Activated T-helper 2 cell treated with anti-CD3 and anti-CD28 coated beads, Interferon-gamma antibody, Interleukin-2, Interleukin-4, amounts not matched to agents 10 μg/mL and 5 μg/mL and 100 μg/mL, durations not matched to agents 14 hours and 24 hours and 36 hours (primary cell): ENCODE measurements at regions of chr13 and their contacts with region 1.

Region 1: DNA sequence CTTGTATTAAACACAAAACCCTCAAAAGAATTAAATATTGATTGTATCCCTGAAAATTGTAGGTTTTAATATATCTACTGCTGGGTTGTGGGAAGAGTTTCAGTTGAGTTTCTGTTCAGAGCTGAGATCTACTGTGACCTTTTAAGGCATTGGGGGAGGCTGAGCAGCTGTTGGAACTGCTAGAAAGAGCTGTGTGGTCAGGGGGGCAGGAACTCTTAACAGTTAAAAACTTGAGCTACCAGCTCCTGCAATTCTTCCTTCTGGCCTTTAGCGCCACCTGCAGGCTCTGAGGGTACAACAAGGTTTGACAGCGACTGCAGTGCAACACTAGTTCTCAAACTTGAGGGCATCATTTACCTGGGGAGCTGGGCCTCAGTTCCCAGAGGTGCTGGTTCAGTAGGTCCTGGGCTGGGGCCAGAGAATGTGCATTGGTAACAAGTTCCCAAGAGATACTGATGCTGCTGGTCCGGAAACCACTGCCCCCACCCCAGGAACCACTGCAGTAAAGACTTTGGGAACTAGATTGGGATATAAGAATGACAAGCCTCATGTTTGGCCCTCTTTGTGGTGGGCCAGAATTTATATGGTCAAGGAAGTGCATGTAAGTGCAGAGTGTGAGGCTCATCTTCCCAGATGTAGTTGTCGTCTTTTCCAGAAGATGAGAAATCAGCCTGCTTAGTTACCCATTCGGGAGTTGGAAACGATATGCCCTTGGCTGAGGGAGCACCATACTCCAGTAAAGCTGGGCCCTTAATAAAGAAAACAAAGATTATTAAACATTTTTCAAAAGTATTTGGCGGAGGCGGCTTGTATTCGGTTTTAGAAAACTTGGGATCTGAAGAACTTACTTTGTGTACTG is 2.6 kb downstream of the RNASEH2B start:
- DNase-seq: peak; percentile 88
- H3K4me3 Mint-ChIP-seq: peak overlapping the region; percentile 93
- H3K27ac Mint-ChIP-seq: peak overlapping the region; percentile 89
- H3K4me1 Mint-ChIP-seq: peaks cover 63% of the 10 kb centered on the region
- H3K27me3 Mint-ChIP-seq: no peaks in the 10 kb centered on the region

Region 2: GRCh38 chr13:49976314-49977258 is 935.6 kb before region 1 on chr13:
- intact Hi-C with region 1: loop called (anchors 1 kb)
- DNase-seq: peak; percentile 50
- H3K4me3 Mint-ChIP-seq: no peak overlapping the region
- H3K27ac Mint-ChIP-seq: no peak overlapping the region
- H3K4me1 Mint-ChIP-seq: peaks cover 8% of the 10 kb centered on the region
- H3K27me3 Mint-ChIP-seq: no peaks in the 10 kb centered on the region

Region 3: DNA sequence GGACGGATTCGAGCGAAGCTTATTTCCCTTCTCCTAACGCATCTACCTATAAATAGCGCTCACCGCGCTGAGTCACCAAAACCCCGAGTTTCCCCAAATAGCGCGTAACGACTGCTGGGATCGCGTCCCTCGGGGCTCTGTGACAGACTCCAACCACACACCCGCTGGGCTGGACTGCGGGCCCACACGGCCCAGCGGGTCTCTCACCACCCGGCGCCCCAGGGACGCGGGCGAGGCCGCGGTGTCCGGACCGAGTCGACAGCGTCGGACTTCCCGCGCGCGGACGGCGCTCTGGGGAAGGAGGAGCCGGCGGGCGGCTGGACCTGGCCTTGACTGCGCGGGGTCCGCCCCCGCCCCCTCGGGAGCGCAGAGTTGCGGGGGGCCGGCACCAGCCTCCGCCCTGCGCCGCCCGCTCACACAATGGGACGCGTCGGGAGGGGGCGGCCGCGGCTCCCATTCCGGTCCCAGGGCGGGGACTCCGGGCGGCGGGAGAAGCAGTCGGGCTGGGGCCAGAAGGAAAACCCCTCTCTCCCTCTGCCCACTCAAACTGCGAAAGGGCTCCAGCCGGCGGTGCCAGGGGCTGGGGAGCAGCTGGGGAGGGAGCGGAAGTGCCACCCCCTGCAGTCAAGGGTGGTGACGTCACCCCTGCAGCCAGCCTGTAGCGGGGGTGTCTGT is 788.2 kb before region 1 on chr13:
- intact Hi-C with region 1: loop called (anchors 2 kb)
- DNase-seq: peak; percentile 58
- H3K4me3 Mint-ChIP-seq: peak overlapping the region; percentile 78
- H3K27ac Mint-ChIP-seq: peak overlapping the region; percentile 80
- H3K4me1 Mint-ChIP-seq: peaks cover 32% of the 10 kb centered on the region
- H3K27me3 Mint-ChIP-seq: peaks cover 29% of the 10 kb centered on the region

Region 4: DNA sequence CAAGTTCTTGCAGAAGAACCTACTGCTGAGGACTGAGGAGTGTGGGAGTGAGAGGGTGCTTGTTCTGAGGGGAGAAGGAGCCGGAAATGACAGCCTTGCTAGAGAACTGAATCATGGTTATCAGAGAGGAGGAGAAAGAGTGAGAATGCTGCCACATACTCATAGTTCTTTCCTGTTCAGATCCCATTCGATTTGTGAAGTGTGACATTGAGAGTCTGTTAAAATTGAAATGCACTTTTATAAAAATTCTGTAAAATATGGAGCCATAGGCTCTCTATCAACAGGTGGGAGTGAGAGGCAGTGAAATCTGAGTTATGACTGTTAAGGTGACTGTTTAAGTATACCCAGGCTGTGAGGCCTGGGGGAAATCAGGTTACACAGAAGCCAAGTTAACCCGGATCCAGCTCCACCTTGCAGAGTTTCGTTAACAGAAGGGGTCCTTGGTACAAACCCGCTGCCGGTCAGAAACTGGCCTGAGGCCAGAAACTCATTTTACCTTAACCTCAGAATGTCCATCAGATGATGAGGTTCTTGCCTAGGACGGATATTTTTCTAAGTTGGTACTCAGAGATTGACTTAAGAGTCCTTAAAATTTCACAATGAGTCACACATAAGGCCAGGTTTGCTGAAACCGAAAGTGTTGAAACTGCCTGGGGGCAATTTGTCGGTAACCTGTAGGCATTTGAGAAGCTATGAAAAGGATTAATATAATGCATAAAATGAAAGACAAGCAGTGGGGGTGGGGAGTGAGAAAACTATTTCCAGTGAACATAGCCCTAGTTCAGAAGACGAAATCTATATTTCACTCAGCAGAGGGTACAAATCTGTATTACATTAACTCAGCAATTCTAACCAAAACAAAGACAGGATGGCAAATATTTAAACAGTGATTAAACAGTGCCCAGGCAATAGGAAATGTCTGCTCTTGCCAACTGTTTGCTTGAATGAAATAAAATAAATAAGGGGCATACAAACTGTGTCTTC is 546.5 kb before region 1 on chr13:
- intact Hi-C with region 1: loop called (anchors 2 kb)
- DNase-seq: peak; percentile 61
- H3K4me3 Mint-ChIP-seq: peak overlapping the region; percentile 3
- H3K27ac Mint-ChIP-seq: peak overlapping the region; percentile 53
- H3K4me1 Mint-ChIP-seq: peaks cover 48% of the 10 kb centered on the region
- H3K27me3 Mint-ChIP-seq: peaks cover 67% of the 10 kb centered on the region

Region 5: DNA sequence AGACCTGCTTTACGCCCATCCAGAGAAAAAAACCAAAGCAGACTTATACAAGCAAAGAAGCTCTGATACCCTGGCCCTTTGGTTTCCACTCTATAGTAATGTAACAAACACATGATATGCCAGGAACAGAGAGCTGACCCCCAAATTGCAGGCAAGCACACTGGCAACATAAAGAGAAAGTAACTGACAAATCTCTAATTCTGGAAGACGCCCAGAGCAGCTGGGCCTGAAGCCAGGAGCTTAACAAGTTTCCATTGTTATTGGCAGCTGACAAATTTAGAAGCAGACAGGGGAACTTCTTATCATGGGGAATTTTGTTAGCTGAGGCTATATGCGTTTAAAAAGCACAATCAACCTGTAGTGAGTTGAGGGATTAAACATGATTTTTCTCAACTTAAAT is 226.7 kb before region 1 on chr13:
- intact Hi-C with region 1: loop called (anchors 10 kb)
- DNase-seq: no peak
- H3K4me3 Mint-ChIP-seq: no peak overlapping the region
- H3K27ac Mint-ChIP-seq: no peak overlapping the region
- H3K4me1 Mint-ChIP-seq: peaks cover 16% of the 10 kb centered on the region
- H3K27me3 Mint-ChIP-seq: peaks cover 58% of the 10 kb centered on the region

Region 6: GRCh38 chr13:50893211-50893852 is 18.8 kb before region 1 on chr13:
- intact Hi-C with region 1: loop called (anchors 1 kb)
- DNase-seq: no peak
- H3K4me3 Mint-ChIP-seq: peak overlapping the region; percentile 51
- H3K27ac Mint-ChIP-seq: peak overlapping the region; percentile 88
- H3K4me1 Mint-ChIP-seq: peaks cover 48% of the 10 kb centered on the region
- H3K27me3 Mint-ChIP-seq: no peaks in the 10 kb centered on the region